ENCODE measurements at regions of chr19 and their contacts with region 1.

Region 1: GRCh38 chr19:13155472-13156359 is 5.5 kb downstream of the IER2 start:
- DNase-seq: peak; percentile 43 to 93 (median 77)
- ATAC-seq: peak; percentile 11
- H3K4me3 ChIP-seq: peak overlapping the region; percentile 77 to 94
- H3K4me3 Mint-ChIP-seq: peak overlapping the region; percentile 98
- H3K27ac ChIP-seq: peak overlapping the region; percentile 96 to 99
- H3K27ac Mint-ChIP-seq: peak overlapping the region; percentile 99
- H3K4me1 ChIP-seq: peaks cover 29% of the 10 kb centered on the region
- H3K4me1 Mint-ChIP-seq: peaks cover 43% of the 10 kb centered on the region
- H3K27me3 ChIP-seq: no peaks in the 10 kb centered on the region
- H3K27me3 Mint-ChIP-seq: no peaks in the 10 kb centered on the region
- CTCF ChIP-seq: no peak

Region 2: GRCh38 chr19:13143135-13143534 is 12.6 kb before region 1 on chr19:
- CTCF ChIA-PET with region 1: no interaction called
- POLR2A ChIA-PET with region 1: no interaction called
- intact Hi-C with region 1: no loop called
- DNase-seq: no peak
- ATAC-seq: no peak
- H3K4me3 ChIP-seq: no peak overlapping the region
- H3K4me3 Mint-ChIP-seq: no peak overlapping the region
- H3K27ac ChIP-seq: no peak overlapping the region
- H3K27ac Mint-ChIP-seq: no peak overlapping the region
- H3K4me1 ChIP-seq: no peaks in the 10 kb centered on the region
- H3K4me1 Mint-ChIP-seq: peaks cover 3% of the 10 kb centered on the region
- H3K27me3 ChIP-seq: no peaks in the 10 kb centered on the region
- H3K27me3 Mint-ChIP-seq: no peaks in the 10 kb centered on the region
- CTCF ChIP-seq: no peak

Region 3: DNA sequence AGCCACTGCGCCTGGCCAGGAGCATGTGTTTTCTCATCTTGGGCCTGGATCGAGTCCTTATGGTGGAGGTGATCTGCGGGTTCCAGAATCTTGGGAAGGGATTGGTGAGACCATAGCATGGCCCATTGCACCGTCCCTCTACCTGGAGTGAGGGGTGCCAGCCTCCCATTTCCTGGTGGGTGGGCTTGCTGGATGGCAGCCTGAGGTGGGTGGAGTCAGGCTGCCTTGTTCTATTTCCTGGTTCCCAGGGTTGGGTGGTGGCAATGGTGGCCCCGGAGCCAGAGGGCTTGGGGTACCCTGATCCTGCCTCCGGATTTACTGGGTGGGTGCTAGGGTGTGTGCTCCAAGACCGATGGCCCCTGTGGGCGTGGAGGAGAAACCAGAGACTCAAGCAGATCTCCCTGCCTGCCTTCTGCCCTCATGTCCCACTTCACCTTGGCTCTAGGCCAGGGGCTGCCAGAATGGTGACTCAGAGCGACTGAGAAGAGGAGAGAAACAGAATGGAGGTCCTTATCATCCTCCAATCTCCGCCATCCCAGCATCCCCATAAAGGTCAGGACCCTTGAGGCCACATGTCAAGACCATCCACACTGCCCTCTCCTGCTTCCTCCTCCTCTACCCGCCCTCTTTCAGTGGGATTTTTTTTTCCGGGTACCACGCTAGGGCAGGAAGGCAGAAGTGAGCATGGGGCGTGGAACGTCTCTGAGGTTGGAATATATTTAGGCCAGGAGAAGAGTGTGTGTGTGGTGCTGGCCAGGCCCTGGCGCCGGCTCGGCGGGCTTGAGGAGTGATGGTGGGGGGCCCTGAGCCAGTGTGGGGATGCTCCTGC is 16.6 kb after region 1 on chr19:
- CTCF ChIA-PET with region 1: interaction called, 12 read pairs
- POLR2A ChIA-PET with region 1: interaction called, 246 read pairs
- intact Hi-C with region 1: loop called (anchors 1 kb)
- DNase-seq: peak; percentile 47 to 90 (median 87)
- ATAC-seq: peak; percentile 15
- H3K4me3 ChIP-seq: peak overlapping the region; percentile 42 to 51
- H3K4me3 Mint-ChIP-seq: peak overlapping the region; percentile 85
- H3K27ac ChIP-seq: peak overlapping the region; percentile 50 to 62
- H3K27ac Mint-ChIP-seq: peak overlapping the region; percentile 98
- H3K4me1 ChIP-seq: peaks cover 65% of the 10 kb centered on the region
- H3K4me1 Mint-ChIP-seq: peaks cover 55% of the 10 kb centered on the region
- H3K27me3 ChIP-seq: no peaks in the 10 kb centered on the region
- H3K27me3 Mint-ChIP-seq: no peaks in the 10 kb centered on the region
- CTCF ChIP-seq: no peak

Region 4: DNA sequence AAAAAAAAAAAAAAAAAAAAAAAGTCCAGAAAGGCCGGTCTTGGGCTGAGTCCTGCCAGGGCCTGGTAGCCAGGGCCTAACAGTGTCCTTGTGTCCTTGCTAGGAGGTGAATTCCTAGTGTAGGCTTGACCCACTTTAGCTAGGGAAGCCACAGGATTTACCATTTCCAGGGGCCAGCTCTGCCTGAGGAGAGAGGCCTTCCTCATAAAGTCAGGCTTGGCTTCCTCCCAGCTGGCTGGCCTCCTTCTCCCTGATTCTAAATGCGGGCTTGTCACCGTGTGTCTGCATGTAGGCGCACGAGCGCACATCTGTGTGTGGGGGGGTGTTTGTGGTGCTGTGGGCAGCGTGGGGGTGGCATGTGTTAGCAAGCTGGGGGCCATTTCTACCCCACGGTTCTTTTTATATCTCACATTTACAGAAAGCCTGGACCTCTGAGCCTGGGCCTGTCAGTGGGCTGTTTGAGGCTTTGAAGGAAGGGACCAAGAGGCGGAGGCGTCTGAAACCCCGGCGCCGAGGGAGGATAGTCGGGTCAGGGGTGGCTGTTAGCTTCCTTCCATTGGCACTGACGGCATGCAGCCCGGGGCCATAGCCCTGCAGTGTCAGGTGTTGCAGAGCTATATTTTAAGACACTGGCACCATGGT is 26.2 kb after region 1 on chr19:
- CTCF ChIA-PET with region 1: interaction called, 118 read pairs
- POLR2A ChIA-PET with region 1: interaction called, 21 read pairs
- intact Hi-C with region 1: no loop called
- DNase-seq: peak in 7 of 9 experiments; percentile 24 to 79 (median 63)
- ATAC-seq: peak; percentile 75
- H3K4me3 ChIP-seq: no peak overlapping the region
- H3K4me3 Mint-ChIP-seq: peak overlapping the region; percentile 68
- H3K27ac ChIP-seq: peak overlapping the region in 1 of 2 experiments; percentile 67
- H3K27ac Mint-ChIP-seq: peak overlapping the region; percentile 82
- H3K4me1 ChIP-seq: peaks cover 26% of the 10 kb centered on the region
- H3K4me1 Mint-ChIP-seq: peaks cover 31% of the 10 kb centered on the region
- H3K27me3 ChIP-seq: no peaks in the 10 kb centered on the region
- H3K27me3 Mint-ChIP-seq: no peaks in the 10 kb centered on the region
- CTCF ChIP-seq: no peak

Region 5: GRCh38 chr19:13880059-13881043 is 724.6 kb after region 1 on chr19:
- CTCF ChIA-PET with region 1: no interaction called
- POLR2A ChIA-PET with region 1: no interaction called
- intact Hi-C with region 1: no loop called
- DNase-seq: peak; percentile 96 to 99 (median 98)
- ATAC-seq: peak; percentile 96
- H3K4me3 ChIP-seq: peak overlapping the region; percentile 13 to 20
- H3K4me3 Mint-ChIP-seq: peak overlapping the region; percentile 69
- H3K27ac ChIP-seq: peak overlapping the region in 1 of 2 experiments; percentile 61
- H3K27ac Mint-ChIP-seq: peak overlapping the region; percentile 66
- H3K4me1 ChIP-seq: peaks cover 51% of the 10 kb centered on the region
- H3K4me1 Mint-ChIP-seq: peaks cover 43% of the 10 kb centered on the region
- H3K27me3 ChIP-seq: no peaks in the 10 kb centered on the region
- H3K27me3 Mint-ChIP-seq: no peaks in the 10 kb centered on the region
- CTCF ChIP-seq: peak; percentile 99

Measured in CD8-positive, alpha-beta T cell (primary cell).